ENCODE measurements at regions of chr5 and their contacts with region 1.

Region 1: GRCh38 chr5:55969956-55970355 is 24.8 kb downstream of the IL6ST start:
- DNase-seq: no peak
- ATAC-seq: no peak
- H3K4me3 ChIP-seq: no peak overlapping the region
- H3K27ac ChIP-seq: no peak overlapping the region
- H3K4me1 ChIP-seq: peaks cover 0 to 46% (median 20%) of the 10 kb centered on the region in 9 donors
- H3K27me3 ChIP-seq: no peaks in the 10 kb centered on the region
- CTCF ChIP-seq: no peak

Region 2: GRCh38 chr5:56112526-56113121 is 142.7 kb after region 1 on chr5:
- intact Hi-C with region 1: no loop called
- DNase-seq: no peak
- ATAC-seq: no peak
- H3K4me3 ChIP-seq: no peak overlapping the region
- H3K27ac ChIP-seq: no peak overlapping the region
- H3K4me1 ChIP-seq: peaks cover 0 to 12% (median 0%) of the 10 kb centered on the region in 9 donors
- H3K27me3 ChIP-seq: no peaks in the 10 kb centered on the region
- CTCF ChIP-seq: no peak

Region 3: DNA sequence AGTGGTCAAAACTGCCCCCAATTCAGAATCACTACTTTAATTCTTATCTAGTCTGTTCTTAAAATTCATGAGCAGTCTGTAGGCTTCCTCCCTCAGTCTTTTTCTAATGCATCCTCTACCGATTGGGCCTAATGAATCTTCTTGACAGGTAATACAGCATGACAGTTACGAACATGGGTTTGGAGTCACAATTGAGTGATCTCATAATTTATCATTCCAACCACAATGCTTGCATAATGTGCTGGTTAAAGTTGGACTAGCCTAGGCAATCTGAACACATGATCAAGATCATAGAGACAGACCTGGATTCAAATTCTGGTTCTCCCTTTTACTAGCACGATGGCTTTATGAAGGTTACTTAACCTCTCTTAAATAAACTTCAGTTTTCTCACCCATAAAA is 906.4 kb after region 1 on chr5:
- intact Hi-C with region 1: loop called in 1 of 10 experiments (anchors 10 kb)
- DNase-seq: no peak
- ATAC-seq: no peak
- H3K4me3 ChIP-seq: no peak overlapping the region
- H3K27ac ChIP-seq: no peak overlapping the region
- H3K4me1 ChIP-seq: peaks cover 0 to 9% (median 0%) of the 10 kb centered on the region in 9 donors
- H3K27me3 ChIP-seq: no peaks in the 10 kb centered on the region
- CTCF ChIP-seq: no peak